Tibial artery (tissue), 4 donors: ENCODE measurements at regions of chr2 and their contacts with region 1.

Region 1: DNA sequence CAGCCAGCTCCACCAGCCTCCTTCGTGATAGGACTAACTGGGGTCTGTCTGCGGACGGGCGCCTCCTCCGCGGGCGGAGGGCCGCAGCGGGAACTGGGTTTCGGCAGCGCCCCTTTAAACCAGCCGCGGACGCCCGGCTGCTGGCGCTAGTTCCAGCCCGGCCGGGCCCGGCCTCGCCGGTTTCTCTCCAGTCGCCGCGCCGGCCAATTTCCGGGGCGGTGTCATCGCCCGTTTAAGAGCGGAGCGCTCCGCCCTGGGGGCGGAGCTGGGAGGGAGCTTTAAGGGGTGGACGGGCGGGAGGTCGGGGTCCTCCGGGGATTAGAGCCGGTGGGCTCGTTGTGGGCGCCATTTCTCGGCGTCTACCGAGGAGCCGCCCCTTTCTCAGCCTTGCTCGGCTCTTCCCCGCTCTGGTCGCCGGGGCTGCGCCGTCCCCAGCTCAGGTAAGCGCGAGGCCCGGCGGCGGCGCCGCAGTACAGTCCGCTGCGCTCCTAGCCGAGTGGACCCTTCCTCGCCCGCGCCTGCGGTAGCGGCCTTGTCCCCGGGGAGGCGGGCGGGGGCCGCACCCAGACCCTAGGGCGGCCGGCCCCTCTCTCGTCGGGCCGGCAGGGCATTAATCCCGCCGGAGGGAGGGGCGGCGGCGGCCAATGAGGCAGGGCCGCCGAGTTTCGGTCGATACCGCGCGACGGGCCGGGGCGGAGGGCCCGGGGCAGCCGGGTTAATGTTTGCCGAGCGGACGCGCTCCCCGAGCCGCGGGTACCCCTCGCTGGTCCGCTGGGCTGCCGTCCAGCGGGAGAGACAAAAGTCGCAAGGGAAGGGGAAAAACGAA is at the start of gene EPB41L5:
- DNase-seq: peak; percentile 90 to 93
- H3K4me3 ChIP-seq: peak within 1 kb of the TSS; percentile 89 to 91
- H3K27ac ChIP-seq: peak within 1 kb of the TSS; percentile 90 to 92
- H3K4me1 ChIP-seq: peaks cover 0 to 19% (median 8%) of the 10 kb centered on the region in 4 donors
- H3K27me3 ChIP-seq: no peaks in the 10 kb centered on the region
- CTCF ChIP-seq: no peak

Region 2: DNA sequence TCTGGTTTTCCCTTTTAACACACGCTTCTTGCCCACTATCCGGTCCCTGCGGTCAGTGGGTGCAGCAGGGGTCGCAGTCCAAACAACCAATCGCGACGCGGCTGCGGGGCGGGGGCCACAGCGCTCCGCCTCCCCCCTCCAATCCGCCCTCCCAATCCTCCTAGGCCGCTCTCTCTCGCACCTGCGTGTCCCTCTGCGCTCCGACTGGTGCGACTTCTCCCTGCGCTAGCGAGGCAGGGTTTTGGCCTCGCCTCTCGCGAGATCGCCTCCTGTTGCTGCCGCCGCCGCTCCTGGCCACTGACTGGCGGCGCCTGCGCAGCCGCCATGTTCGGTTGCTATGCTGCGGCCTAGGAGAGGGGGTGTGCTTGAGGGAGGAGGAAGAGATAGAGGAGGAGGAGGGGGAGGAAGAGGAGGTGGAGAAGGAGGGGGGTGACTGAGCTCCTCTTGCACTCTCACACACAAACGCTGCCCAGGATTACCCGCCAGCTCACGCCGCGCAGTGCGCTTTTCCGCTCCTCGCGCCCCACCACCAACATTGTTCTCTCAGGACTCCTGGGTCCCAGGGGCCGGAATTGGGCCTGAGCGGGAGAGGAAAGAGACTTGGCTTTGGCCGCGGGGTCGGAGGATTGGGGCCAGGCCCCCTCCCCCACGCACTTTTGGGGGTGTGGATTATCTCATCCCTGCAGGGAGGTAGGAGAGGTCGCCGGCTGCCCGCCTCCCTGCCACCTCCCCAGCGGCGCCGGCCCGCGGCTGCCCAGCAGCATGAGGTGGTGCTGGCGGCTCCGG is 253.3 kb before region 1 on chr2 and contains the start of gene PTPN4:
- intact Hi-C with region 1: loop called (anchors 10 kb)
- DNase-seq: peak; percentile 94 to 98
- H3K4me3 ChIP-seq: peak within 1 kb of the TSS; percentile 91 to 97
- H3K27ac ChIP-seq: peak within 1 kb of the TSS; percentile 87 to 91
- H3K4me1 ChIP-seq: peaks cover 0 to 31% (median 0%) of the 10 kb centered on the region in 4 donors
- H3K27me3 ChIP-seq: no peaks in the 10 kb centered on the region
- CTCF ChIP-seq: peak in 1 of 2 experiments; percentile 6